Activated CD4-positive, alpha-beta memory T cell treated with anti-CD3 and anti-CD28 coated beads, Interleukin-2, amount 10 ng/mL, durations not matched to agents 7 days and 5 days (primary cell): ENCODE measurements at regions of chr5 and their contacts with region 1.

Region 1: GRCh38 chr5:178130604-178131485 is at the start of gene RMND5B:
- DNase-seq: peak; percentile 83
- H3K4me3 Mint-ChIP-seq: peak within 1 kb of the TSS; percentile 74
- H3K27ac Mint-ChIP-seq: peak within 1 kb of the TSS; percentile 70
- H3K4me1 Mint-ChIP-seq: peaks cover 20% of the 10 kb centered on the region
- H3K27me3 Mint-ChIP-seq: peaks cover 2% of the 10 kb centered on the region
- total RNA-seq, gene RMND5B: 17.0 to 19.3 TPM

Region 2: GRCh38 chr5:178113199-178113787 is 17.6 kb before region 1 on chr5 and contains the start of gene N4BP3:
- CTCF ChIA-PET with region 1: no interaction called
- POLR2A ChIA-PET with region 1: interaction called, 16 read pairs
- DNase-seq: peak; percentile 85
- H3K4me3 Mint-ChIP-seq: peak within 1 kb of the TSS; percentile 77
- H3K27ac Mint-ChIP-seq: no peak within 1 kb of the TSS
- H3K4me1 Mint-ChIP-seq: peaks cover 40% of the 10 kb centered on the region
- H3K27me3 Mint-ChIP-seq: peaks cover 48% of the 10 kb centered on the region
- total RNA-seq, gene N4BP3: 4.3 to 4.4 TPM

Region 3: DNA sequence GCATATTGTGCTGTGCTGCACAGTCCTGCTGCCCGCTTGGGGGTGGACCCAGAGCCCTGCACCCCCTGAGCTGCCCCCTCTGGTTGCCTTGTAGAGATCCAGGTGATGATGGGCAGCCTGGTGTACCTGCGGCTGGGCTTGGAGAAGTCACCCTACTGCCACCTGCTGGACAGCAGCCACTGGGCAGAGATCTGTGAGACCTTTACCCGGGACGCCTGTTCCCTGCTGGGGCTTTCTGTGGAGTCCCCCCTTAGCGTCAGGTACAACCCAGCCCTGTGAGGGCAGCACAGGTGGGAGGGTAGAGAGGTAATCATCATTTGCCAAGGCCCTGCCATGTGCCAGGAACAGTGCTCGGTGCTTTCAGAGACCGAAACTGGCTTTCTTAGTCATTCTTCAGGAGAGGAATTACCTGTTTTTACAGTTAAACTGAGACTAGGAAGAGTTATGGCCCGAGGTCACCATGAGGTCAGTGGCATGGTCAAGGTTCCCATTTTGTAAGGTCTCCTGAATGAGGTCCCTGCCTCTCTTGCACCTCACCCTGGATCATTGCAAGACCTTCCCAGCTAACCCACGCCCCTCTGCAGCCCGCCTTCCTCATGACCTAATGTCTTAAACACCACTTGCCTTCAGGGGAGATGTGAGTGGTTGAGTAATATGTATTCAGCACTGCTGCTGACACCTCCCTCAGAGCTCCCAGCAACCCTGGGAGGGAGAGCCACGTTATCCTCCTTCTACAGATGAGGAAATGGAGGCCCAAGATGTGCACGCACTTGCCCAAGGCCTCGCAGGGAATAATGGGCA is 15.4 kb after region 1 on chr5:
- CTCF ChIA-PET with region 1: interaction called, 7 read pairs
- POLR2A ChIA-PET with region 1: interaction called, 15 read pairs
- DNase-seq: peak; percentile 74
- H3K4me3 Mint-ChIP-seq: no peak overlapping the region
- H3K27ac Mint-ChIP-seq: no peak overlapping the region
- H3K4me1 Mint-ChIP-seq: peaks cover 36% of the 10 kb centered on the region
- H3K27me3 Mint-ChIP-seq: no peaks in the 10 kb centered on the region